H1 (cell line): ENCODE measurements at regions of chr1 and their contacts with region 1.

Region 1: GRCh38 chr1:18805925-18806849 is 53.3 kb downstream of the TAS1R2 start:
- DNase-seq: no peak
- H3K4me3 ChIP-seq: no peak overlapping the region
- H3K27ac ChIP-seq: no peak overlapping the region
- H3K4me1 ChIP-seq: peaks cover 0 to 3% (median 1%) of the 10 kb centered on the region in 4 experiments; a peak in 2 of 7 replicates
- H3K27me3 ChIP-seq: peaks cover 0 to 4% (median 0%) of the 10 kb centered on the region in 4 experiments; a peak in 2 of 7 replicates
- CTCF ChIP-seq: peak in 1 of 3 experiments; percentile 4; a peak in 1 of 4 replicates
- EP300 ChIP-seq: no peak
- POLR2A ChIP-seq: no peak
- RAD21 ChIP-seq: no peak; a peak in 1 of 4 replicates

Region 2: GRCh38 chr1:18794561-18794960 is 11.6 kb before region 1 on chr1:
- CTCF ChIA-PET with region 1: interaction called, 10 read pairs
- POLR2A ChIA-PET with region 1: no interaction called
- DNase-seq: peak; percentile 33 to 78
- H3K4me3 ChIP-seq: no peak overlapping the region; a peak in 1 of 8 replicates
- H3K27ac ChIP-seq: no peak overlapping the region
- H3K4me1 ChIP-seq: peaks cover 3 to 15% (median 7%) of the 10 kb centered on the region in 4 experiments; a peak in 6 of 7 replicates
- H3K27me3 ChIP-seq: peaks cover 0 to 4% (median 0%) of the 10 kb centered on the region in 4 experiments; a peak in 3 of 7 replicates
- CTCF ChIP-seq: peak; percentile 49 to 60 (median 56)
- EP300 ChIP-seq: no peak
- POLR2A ChIP-seq: no peak
- RAD21 ChIP-seq: peak; percentile 41 to 59

Region 3: DNA sequence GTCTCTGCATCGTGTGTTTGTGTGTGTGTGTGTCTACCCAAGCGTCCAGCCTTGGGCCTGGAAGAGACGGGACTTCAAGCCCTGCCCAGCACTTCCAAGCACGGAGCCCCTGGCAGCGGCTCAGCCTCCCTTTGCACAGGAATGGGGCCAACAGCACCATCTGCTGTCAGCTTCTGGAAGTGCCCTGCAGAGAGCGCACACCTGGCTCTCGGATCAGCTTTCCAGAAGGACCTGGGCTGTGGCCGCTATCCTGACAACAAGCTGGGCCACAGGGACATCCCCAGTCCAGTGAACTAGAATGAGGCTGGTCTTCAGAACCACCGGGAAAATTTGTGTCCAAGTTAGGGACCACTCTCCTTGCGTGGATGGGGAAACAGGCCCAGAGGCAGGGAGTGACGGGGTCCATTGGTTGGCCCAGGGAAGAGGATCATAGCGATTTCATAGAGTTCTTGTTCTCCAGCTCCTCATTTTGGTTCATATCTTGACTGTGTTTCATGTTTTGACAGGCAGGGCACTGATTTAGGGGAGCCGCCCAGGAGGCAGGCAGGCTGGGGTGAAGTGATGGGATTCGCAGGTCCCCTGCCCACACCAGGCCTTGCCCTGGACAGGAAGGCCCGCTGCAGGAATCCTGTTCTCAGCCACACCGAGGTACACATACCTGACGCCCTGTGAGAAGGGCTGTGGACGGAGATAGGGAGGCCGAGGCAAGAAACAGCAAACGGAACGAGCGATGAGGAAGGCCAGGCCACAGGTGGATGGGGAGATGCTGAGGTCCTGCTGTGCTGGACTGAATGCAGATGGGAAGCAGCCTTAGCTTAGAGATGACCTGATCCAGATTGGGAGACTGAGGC is 14.8 kb after region 1 on chr1:
- CTCF ChIA-PET with region 1: interaction called, 12 read pairs
- POLR2A ChIA-PET with region 1: interaction called, 3 read pairs
- DNase-seq: peak; percentile 53 to 97
- H3K4me3 ChIP-seq: no peak overlapping the region
- H3K27ac ChIP-seq: no peak overlapping the region
- H3K4me1 ChIP-seq: peaks cover 3 to 10% (median 5%) of the 10 kb centered on the region in 4 experiments; a peak in 5 of 7 replicates
- H3K27me3 ChIP-seq: peaks cover 0 to 19% (median 15%) of the 10 kb centered on the region in 4 experiments; a peak in 6 of 7 replicates
- CTCF ChIP-seq: peak; percentile 93 to 99 (median 94)
- EP300 ChIP-seq: no peak
- POLR2A ChIP-seq: no peak
- RAD21 ChIP-seq: peak; percentile 96 to 97